AG04450 (cell line): ENCODE measurements at regions of chr1 and their contacts with region 1.

Region 1: DNA sequence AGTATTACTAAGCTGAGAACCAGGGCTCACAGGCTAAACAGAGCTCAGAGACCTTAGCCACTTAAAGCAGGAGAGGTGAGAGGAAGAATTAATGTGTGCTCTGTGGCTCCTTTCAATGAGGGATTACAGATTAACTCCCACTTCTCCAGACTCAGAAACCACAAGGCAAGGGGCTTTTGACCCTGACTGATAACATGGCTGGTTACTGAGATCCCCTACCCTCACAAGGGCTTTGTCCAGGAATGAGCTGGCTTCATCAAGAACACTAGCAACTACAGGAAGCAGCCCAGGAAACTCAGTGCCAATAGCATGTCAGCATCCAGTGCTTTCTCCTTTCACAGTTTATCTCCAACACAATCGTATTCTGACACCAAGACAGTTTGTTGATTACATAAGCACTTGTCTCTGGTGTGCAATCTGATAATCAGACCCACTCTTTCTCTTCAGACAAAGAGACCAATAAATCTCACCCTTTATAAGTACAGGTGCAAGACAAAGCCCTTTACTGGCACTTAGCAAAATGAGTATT is 38.8 kb downstream of the ERI3 start:
- DNase-seq: no peak
- H3K4me3 ChIP-seq: no peak overlapping the region
- H3K27ac ChIP-seq: no peak overlapping the region
- H3K27me3 ChIP-seq: no peaks in the 10 kb centered on the region
- CTCF ChIP-seq: no peak

Region 2: DNA sequence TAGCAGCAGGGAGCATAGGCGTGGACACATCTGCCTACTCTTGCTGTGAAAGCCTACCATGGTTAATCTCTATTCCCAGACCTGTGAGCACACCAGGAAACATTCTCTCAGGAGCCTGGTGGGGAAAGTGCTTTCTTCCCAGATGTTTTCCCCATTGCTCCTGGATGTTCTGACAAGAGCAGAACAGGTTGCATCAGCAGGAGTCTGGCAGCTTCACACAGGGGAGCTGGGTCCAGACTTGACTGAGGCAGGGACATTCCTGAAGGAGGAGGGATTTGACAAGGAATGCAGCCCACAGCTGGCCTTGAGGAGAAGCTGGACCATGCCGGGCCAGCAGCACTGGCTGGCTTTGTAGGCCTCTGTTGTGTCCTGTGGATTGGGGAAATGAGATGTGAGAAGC is 403.7 kb before region 1 on chr1:
- CTCF ChIA-PET with region 1: no interaction called
- POLR2A ChIA-PET with region 1: no interaction called
- DNase-seq: peak; percentile 54
- H3K4me3 ChIP-seq: no peak overlapping the region
- H3K27ac ChIP-seq: peak overlapping the region; percentile 52
- H3K27me3 ChIP-seq: no peaks in the 10 kb centered on the region
- CTCF ChIP-seq: no peak

Region 3: DNA sequence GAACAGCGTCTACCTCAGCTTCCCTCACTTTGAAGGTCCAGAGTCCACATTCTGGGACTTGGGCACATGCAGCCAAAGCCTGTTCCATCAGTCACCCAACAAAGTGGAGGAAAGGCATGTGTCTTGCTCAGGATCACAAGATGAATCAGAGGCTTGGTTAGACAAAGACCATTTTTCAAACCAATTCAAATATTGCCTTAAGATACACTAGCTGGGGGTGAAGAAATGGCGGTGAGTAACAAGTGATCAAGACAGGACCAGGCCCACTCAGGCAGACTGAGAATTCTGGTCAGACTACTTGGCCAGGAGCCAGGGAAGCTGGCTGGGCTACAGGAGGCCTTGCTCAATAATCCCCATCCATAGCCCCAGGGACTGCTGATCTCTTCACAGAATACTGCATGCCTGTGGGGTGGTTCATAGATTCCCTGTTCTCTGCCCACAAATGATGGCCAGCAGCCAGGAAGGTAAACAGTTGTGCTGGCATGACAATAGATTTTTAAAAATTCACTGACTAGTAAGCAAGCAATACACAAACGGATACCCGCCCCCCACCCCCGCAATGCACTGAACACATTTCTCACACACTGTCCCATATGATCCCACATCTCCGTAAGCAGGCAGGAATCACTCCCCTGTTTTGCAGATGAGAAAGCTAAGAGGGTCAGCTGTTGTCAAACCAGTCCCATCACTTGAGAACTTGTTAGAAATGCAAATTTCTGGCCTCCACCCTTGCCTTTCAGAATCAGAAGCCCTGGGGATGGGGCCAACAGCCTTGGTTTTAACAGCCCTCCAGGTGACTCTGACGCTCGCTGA is 11.6 kb after region 1 on chr1:
- CTCF ChIA-PET with region 1: interaction called, 14 read pairs
- POLR2A ChIA-PET with region 1: no interaction called
- DNase-seq: peak; percentile 98
- H3K4me3 ChIP-seq: no peak overlapping the region
- H3K27ac ChIP-seq: peak overlapping the region; percentile 92
- H3K27me3 ChIP-seq: no peaks in the 10 kb centered on the region
- CTCF ChIP-seq: no peak

Region 4: GRCh38 chr1:44542420-44543063 is 226.2 kb after region 1 on chr1:
- CTCF ChIA-PET with region 1: no interaction called
- POLR2A ChIA-PET with region 1: no interaction called
- DNase-seq: no peak
- H3K4me3 ChIP-seq: no peak overlapping the region
- H3K27ac ChIP-seq: no peak overlapping the region
- H3K27me3 ChIP-seq: peaks cover 37% of the 10 kb centered on the region
- CTCF ChIP-seq: no peak

Region 5: GRCh38 chr1:44826375-44827196 is 510.3 kb after region 1 on chr1:
- CTCF ChIA-PET with region 1: no interaction called
- POLR2A ChIA-PET with region 1: no interaction called
- DNase-seq: no peak
- H3K4me3 ChIP-seq: no peak overlapping the region
- H3K27ac ChIP-seq: no peak overlapping the region
- H3K27me3 ChIP-seq: no peaks in the 10 kb centered on the region
- CTCF ChIP-seq: no peak